ENCODE measurements at regions of chrX and their contacts with region 1.

Region 1: GRCh38 chrX:22081475-22082092 is 49.5 kb downstream of the PHEX start:
- DNase-seq: no peak
- ATAC-seq: peak; percentile 57
- H3K4me3 Mint-ChIP-seq: no peak overlapping the region
- H3K27ac Mint-ChIP-seq: no peak overlapping the region
- H3K4me1 Mint-ChIP-seq: peaks cover 2% of the 10 kb centered on the region
- H3K27me3 Mint-ChIP-seq: no peaks in the 10 kb centered on the region
- CTCF ChIP-seq: no peak

Region 2: GRCh38 chrX:22220941-22221340 is 139.4 kb after region 1 on chrX:
- CTCF ChIA-PET with region 1: no interaction called
- POLR2A ChIA-PET with region 1: no interaction called
- intact Hi-C with region 1: no loop called
- DNase-seq: no peak
- ATAC-seq: no peak
- H3K4me3 Mint-ChIP-seq: no peak overlapping the region
- H3K27ac Mint-ChIP-seq: no peak overlapping the region
- H3K4me1 Mint-ChIP-seq: no peaks in the 10 kb centered on the region
- H3K27me3 Mint-ChIP-seq: no peaks in the 10 kb centered on the region
- CTCF ChIP-seq: no peak

Region 3: DNA sequence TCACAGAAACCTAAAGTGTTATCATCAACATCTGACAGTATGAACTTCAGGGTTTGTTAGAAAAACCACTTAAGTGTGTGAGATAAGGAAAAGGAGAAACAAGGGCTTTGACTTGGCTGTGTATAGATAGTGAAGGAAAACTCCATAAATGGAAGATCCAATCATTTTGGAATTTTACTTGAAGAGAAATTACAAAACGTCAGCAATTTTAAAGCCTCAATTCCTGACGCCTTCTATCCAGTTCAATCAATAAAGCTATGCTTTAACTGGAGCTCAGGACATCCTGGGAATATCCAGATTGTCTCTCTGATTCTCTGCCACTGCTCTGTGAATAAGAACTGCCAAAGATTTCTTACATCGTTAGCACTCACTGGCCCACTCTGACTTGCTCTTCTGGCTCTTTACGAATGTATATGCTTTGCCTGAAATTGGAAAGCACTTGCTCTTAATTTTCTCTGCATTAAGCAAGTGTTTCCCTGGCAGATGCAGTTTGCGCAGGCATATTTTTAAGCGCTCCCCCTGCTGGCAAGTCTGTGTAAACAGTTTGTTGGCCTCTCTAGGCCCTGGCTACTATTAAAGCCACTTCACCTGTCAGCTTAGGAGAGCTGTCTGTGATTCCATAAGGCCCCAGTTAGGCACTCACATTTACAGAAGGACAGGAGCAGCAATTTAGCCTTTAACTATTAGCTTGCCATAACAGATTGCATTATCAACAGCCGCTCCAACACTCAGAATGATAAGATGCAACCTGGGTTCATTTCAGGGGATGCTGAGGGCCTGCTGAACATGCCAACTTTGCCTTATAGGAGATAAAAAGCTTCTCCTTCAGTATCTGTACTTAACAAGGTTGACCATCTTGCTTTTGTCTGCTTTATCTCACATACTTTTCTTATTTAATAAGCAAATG is 666.8 kb after region 1 on chrX:
- CTCF ChIA-PET with region 1: no interaction called
- POLR2A ChIA-PET with region 1: no interaction called
- intact Hi-C with region 1: loop called (anchors 2 kb)
- DNase-seq: peak; percentile 14
- ATAC-seq: peak; percentile 64
- H3K4me3 Mint-ChIP-seq: no peak overlapping the region
- H3K27ac Mint-ChIP-seq: no peak overlapping the region
- H3K4me1 Mint-ChIP-seq: no peaks in the 10 kb centered on the region
- H3K27me3 Mint-ChIP-seq: no peaks in the 10 kb centered on the region
- CTCF ChIP-seq: no peak

Measured in activated B cell treated with CpG ODN at 0.5 μM for 24 hours (primary cell).